ENCODE measurements at regions of chr12 and their contacts with region 1.

Region 1: DNA sequence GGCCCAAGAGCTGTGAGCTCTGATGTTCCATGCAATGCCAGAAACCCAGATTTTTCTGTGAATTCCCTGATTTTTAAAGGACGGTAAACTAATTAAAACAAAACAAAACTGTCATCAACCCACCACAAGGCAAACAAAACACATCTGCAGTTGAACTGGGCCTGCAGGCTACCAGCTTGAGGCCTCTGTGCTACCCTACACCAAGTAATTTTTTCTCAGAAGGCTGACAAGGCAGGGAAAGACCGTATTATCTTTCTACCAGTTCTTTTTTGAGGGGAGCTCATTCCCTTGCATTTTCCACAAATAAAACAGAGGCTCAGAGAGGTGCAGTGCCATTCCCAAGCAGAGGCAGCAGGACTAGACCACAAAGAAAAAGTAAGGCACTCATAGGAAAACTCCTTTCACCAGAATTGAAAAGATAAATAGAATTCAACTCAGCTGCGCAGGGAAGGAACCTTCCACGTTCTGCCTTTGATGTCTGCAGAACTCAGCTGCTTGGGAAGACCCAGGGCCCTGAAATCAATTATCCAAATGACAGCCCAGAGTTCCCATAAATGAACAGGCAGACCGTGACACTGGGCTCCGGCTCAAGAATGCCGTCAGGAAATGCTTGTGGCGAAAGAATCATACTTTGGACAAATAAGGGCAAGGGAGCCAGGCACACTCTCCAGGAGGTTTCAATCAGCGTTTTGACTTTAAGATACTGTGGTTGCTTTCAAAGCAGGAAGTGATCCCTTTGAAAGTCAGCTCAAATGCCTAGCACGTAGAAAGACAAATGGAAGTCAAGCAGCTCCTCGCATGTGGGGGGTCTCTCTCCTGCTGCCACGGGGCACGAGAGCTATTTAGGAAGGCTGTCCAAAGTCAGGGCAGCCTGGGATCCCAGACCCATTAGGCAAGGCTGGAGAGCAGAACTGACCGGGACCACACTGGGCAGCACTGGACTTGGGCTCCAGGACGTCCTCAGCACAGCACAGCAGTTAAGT is 14.1 kb downstream of the KCTD10 start:
- DNase-seq: no peak
- H3K4me3 ChIP-seq: peak overlapping the region in 1 of 4 experiments; percentile 10; a peak in 2 of 8 replicates
- H3K27ac ChIP-seq: peak overlapping the region; percentile 6; the same call in 1 of the 2 replicates
- H3K4me1 ChIP-seq: peaks cover 41 to 64% (median 49%) of the 10 kb centered on the region in 4 experiments
- H3K27me3 ChIP-seq: no peaks in the 10 kb centered on the region
- CTCF ChIP-seq: no peak
- EP300 ChIP-seq: no peak; a peak in 1 of 3 replicates
- POLR2A ChIP-seq: no peak
- RAD21 ChIP-seq: no peak

Region 2: DNA sequence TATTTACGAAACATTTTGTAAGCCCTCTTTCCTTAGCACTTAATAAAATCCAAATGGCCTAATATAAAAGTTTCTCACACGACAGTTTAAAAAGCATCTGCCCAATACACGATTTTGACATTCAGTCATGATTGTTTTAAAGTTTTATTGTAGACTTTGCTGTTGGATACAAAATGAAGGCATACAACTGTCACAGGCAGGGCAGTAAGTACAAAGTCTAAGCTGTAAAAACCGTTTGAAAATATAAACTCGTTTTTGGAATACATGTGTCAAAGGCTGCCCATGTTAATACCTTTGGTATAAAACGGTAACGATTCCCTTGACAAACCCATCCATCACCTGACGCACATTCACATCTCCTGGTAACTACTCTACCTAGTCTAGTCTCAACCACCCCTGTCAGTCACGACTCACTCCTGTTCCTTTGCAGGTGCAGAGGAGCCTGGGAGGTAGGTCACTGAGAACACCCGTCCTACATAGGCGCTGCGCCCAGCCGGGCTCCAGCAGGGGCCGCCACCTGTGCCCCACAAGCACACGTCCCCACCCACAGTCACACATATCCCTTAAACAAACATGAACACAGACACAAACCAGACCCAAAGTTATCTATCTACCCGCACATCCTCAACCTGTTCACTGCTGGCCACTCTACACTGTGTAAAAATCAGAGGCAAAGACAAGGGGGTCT is 13.0 kb before region 1 on chr12:
- CTCF ChIA-PET with region 1: interaction called, 15 read pairs
- POLR2A ChIA-PET with region 1: interaction called, 8 read pairs
- DNase-seq: no peak
- H3K4me3 ChIP-seq: no peak overlapping the region
- H3K27ac ChIP-seq: no peak overlapping the region
- H3K4me1 ChIP-seq: no peaks in the 10 kb centered on the region
- H3K27me3 ChIP-seq: no peaks in the 10 kb centered on the region
- CTCF ChIP-seq: peak; percentile 61 to 75 (median 74)
- EP300 ChIP-seq: no peak
- POLR2A ChIP-seq: no peak
- RAD21 ChIP-seq: peak; percentile 48 to 68

Region 3: GRCh38 chr12:109477185-109477962 is 14.4 kb after region 1 on chr12 and contains the starts of genes KCTD10 and UBE3B:
- CTCF ChIA-PET with region 1: interaction called, 7 read pairs
- POLR2A ChIA-PET with region 1: interaction called, 25 read pairs
- DNase-seq: peak in 1 of 2 experiments; percentile 93
- H3K4me3 ChIP-seq: peak within 1 kb of the TSS; percentile 92 to 97 (median 94)
- H3K27ac ChIP-seq: peak within 1 kb of the TSS; percentile 98
- H3K4me1 ChIP-seq: peaks cover 0 to 10% (median 5%) of the 10 kb centered on the region in 4 experiments; a peak in 4 of 7 replicates
- H3K27me3 ChIP-seq: no peaks in the 10 kb centered on the region
- CTCF ChIP-seq: no peak
- EP300 ChIP-seq: no peak
- POLR2A ChIP-seq: peak; percentile 23 to 72
- RAD21 ChIP-seq: no peak; a peak in 2 of 4 replicates
- total RNA-seq, gene KCTD10: 52.4 and 54.3 TPM in 2 replicates
- total RNA-seq, gene UBE3B: 21.1 and 21.8 TPM in 2 replicates

Region 4: GRCh38 chr12:109833307-109834189 is 370.5 kb after region 1 on chr12 and contains the start of gene TRPV4:
- CTCF ChIA-PET with region 1: no interaction called
- POLR2A ChIA-PET with region 1: no interaction called
- DNase-seq: peak in 1 of 2 experiments; percentile 77
- H3K4me3 ChIP-seq: peak within 1 kb of the TSS; percentile 38 to 61 (median 43)
- H3K27ac ChIP-seq: no peak within 1 kb of the TSS
- H3K4me1 ChIP-seq: peaks cover 0 to 6% (median 1%) of the 10 kb centered on the region in 4 experiments; a peak in 3 of 7 replicates
- H3K27me3 ChIP-seq: no peaks in the 10 kb centered on the region; a peak in 1 of 7 replicates
- CTCF ChIP-seq: no peak
- EP300 ChIP-seq: no peak
- POLR2A ChIP-seq: no peak
- RAD21 ChIP-seq: no peak
- total RNA-seq, gene TRPV4: 2.1 and 2.5 TPM in 2 replicates

Measured in H1 (cell line).